ENCODE measurements at regions of chr20 and their contacts with region 1.

Region 1: DNA sequence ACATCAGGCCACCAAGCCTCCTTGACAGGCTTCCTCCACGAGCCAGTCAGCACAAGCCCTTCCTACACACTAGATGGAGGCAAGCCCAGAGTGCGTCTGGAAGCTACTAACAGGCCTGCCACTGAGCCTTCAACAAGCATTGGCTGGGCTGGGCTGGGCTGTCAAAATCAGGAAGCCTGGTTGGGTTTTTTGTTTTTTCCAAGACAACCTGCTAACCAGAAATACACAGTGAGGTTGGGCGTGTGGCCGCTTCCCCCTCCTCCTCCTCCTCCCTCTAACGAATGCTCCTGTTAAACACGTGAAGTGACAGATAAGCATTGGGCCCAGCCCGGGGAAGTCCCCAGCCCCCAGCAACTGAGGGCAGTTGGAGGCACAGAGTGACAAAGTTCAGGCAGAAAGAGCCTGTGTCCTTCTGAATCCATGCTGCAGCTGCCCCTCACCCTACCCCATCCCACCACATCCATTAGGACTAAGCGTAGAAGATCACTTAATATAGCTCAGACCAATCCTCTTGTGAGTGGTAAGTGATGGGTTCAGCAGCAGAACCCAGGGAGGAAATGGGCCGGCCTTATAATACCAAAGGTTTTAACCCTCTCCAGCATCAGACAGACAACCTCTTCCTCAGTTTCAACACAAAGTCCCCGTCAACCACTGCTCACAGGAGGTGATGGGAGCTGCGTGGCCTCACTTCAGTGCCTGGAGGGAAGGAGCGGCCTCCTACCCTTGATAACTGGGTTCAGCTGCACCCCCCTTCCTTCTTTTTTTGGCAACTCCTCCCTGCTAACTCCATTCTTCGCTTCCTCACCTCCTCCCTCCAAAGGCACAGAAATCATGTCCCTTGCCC is 1.1 kb downstream of the NFATC2 start:
- DNase-seq: peak; percentile 46 to 89 (median 81)
- ATAC-seq: peak; percentile 87
- H3K4me3 ChIP-seq: peak overlapping the region; percentile 68
- H3K4me3 Mint-ChIP-seq: peak overlapping the region; percentile 93 to 100 (median 98)
- H3K27ac ChIP-seq: peak overlapping the region; percentile 96
- H3K27ac Mint-ChIP-seq: peak overlapping the region; percentile 88 to 100 (median 97)
- H3K4me1 ChIP-seq: peaks cover 46 to 48% of the 10 kb centered on the region in 2 donors
- H3K4me1 Mint-ChIP-seq: peaks cover 38 to 62% (median 56%) of the 10 kb centered on the region in 7 donors
- H3K27me3 ChIP-seq: no peaks in the 10 kb centered on the region
- H3K27me3 Mint-ChIP-seq: peaks cover 0 to 22% (median 0%) of the 10 kb centered on the region in 5 donors

Region 2: DNA sequence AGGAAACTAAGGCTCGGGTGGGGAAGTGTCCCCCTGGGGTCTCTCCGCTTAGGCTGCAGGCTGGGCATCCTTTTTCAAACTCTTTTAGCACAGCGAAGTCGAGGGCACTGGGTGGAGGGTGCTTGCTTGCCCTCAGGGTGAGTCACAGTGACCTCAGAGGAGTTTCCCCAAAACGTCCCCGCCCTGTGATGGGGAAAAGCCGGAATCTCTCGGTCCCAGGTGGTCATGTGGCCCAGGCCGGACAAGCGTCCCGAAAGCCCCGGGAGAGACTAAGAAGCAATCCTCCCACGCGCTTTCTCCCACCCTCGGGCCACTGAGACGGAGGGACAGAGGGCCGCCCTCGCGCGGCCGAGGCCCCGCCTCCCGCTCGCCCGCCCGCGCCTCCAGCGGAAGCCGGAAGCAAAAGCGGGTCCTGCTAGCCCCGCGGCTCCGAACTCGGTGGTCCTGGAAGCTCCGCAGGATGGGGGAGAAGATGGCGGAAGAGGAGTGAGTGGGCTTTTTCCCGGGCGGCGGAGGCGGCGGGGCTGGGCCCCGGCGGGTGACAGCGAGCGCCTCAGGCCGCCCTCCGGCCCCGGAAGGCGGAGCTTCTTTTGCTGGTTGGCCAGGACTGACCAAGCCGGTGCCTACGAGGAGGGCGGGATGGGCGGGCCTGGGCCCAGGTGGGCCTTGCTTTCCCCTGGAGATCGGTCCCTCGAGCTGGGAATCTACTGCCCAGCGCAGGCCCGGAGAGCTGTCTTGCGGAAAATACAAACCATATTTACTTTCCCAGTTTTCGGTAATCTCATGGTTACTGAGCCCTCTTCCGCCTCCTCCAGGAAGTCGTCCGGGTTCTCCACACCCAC is 1728.7 kb before region 1 on chr20 and contains the start of gene SLC9A8:
- CTCF ChIA-PET with region 1: no interaction called
- POLR2A ChIA-PET with region 1: no interaction called
- intact Hi-C with region 1: loop called in 1 of 2 experiments (anchors 5 kb)
- DNase-seq: peak; percentile 67 to 85 (median 75)
- ATAC-seq: peak; percentile 93
- H3K4me3 ChIP-seq: peak within 1 kb of the TSS; percentile 81
- H3K4me3 Mint-ChIP-seq: peak within 1 kb of the TSS; percentile 90 to 99 (median 94)
- H3K27ac ChIP-seq: peak within 1 kb of the TSS; percentile 95
- H3K27ac Mint-ChIP-seq: peak within 1 kb of the TSS; percentile 94 to 98 (median 96)
- H3K4me1 ChIP-seq: peaks cover 12 to 17% of the 10 kb centered on the region in 2 donors
- H3K4me1 Mint-ChIP-seq: peaks cover 13 to 44% (median 39%) of the 10 kb centered on the region in 7 donors
- H3K27me3 ChIP-seq: no peaks in the 10 kb centered on the region
- H3K27me3 Mint-ChIP-seq: no peaks in the 10 kb centered on the region
- total RNA-seq, gene SLC9A8: 21.7 to 42.5 (median 25.7) TPM

Region 3: GRCh38 chr20:51385646-51386530 is 155.5 kb before region 1 on chr20:
- CTCF ChIA-PET with region 1: interaction called, 6 read pairs
- POLR2A ChIA-PET with region 1: interaction called, 3 read pairs
- intact Hi-C with region 1: loop called (anchors 1 to 5 kb)
- DNase-seq: peak in 4 of 9 donors; percentile 10 to 27 (median 20)
- ATAC-seq: peak; percentile 48
- H3K4me3 ChIP-seq: no peak overlapping the region
- H3K4me3 Mint-ChIP-seq: no peak overlapping the region
- H3K27ac ChIP-seq: no peak overlapping the region
- H3K27ac Mint-ChIP-seq: peak overlapping the region in 8 of 9 donors; percentile 4 to 77 (median 62)
- H3K4me1 ChIP-seq: peaks cover 0 to 67% of the 10 kb centered on the region in 2 donors
- H3K4me1 Mint-ChIP-seq: peaks cover 0 to 61% (median 5%) of the 10 kb centered on the region in 7 donors
- H3K27me3 ChIP-seq: no peaks in the 10 kb centered on the region
- H3K27me3 Mint-ChIP-seq: no peaks in the 10 kb centered on the region

Region 4: DNA sequence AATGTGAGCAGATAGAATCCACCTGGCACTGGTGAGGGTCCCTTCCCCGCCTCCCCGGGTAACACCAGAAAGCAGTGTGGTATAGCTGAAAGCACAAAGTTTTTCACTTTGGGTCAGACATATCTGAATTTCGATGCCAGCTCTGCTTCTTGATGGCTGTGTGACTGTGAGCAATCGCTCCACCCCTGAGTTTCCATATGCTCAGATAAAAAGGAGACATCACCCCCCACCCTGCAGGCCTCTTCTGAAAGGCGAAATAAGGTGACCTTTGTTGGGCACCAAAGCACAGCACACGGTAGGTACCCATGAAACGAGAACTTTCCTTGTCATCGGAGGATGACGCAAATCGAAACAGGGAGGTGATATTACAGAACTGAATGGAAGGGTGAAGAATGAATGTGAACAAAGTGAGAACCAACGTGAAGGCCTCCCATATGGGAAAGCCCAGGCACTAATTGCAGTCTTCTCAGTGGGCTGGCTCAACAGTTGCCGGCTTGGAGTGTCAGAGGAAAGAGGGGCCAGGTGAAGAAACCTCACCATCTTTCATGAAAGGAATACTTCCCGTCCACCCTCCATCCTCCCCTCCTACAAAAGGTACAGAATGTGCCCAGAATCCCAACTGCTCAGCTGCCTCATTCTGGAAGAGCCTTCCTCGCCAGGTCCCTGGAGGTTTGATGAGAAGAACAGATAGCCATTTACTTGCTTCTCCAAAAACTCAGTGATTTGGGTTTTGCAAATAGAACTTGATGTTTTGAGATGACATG is 60.7 kb before region 1 on chr20:
- CTCF ChIA-PET with region 1: no interaction called
- POLR2A ChIA-PET with region 1: interaction called, 3 read pairs
- intact Hi-C with region 1: loop called in 1 of 2 experiments (anchors 1 kb)
- DNase-seq: peak in 2 of 9 donors; percentile 36 to 66
- ATAC-seq: peak; percentile 68
- H3K4me3 ChIP-seq: peak overlapping the region; percentile 8
- H3K4me3 Mint-ChIP-seq: peak overlapping the region; percentile 60 to 86 (median 76)
- H3K27ac ChIP-seq: peak overlapping the region; percentile 63
- H3K27ac Mint-ChIP-seq: peak overlapping the region; percentile 60 to 94 (median 88)
- H3K4me1 ChIP-seq: peaks cover 30 to 33% of the 10 kb centered on the region in 2 donors
- H3K4me1 Mint-ChIP-seq: peaks cover 64 to 90% (median 86%) of the 10 kb centered on the region in 7 donors
- H3K27me3 ChIP-seq: no peaks in the 10 kb centered on the region
- H3K27me3 Mint-ChIP-seq: no peaks in the 10 kb centered on the region

Region 5: GRCh38 chr20:51512645-51513044 is 28.8 kb before region 1 on chr20:
- CTCF ChIA-PET with region 1: interaction called, 3 read pairs
- POLR2A ChIA-PET with region 1: interaction called, 21 read pairs
- intact Hi-C with region 1: loop called in 1 of 2 experiments (anchors 1 kb)
- DNase-seq: peak in 6 of 9 donors; percentile 34 to 61 (median 44)
- ATAC-seq: peak; percentile 80
- H3K4me3 ChIP-seq: peak overlapping the region; percentile 9
- H3K4me3 Mint-ChIP-seq: peak overlapping the region; percentile 47 to 81 (median 62)
- H3K27ac ChIP-seq: peak overlapping the region; percentile 61
- H3K27ac Mint-ChIP-seq: peak overlapping the region; percentile 82 to 94 (median 91)
- H3K4me1 ChIP-seq: peaks cover 60 to 61% of the 10 kb centered on the region in 2 donors
- H3K4me1 Mint-ChIP-seq: peaks cover 57 to 97% (median 89%) of the 10 kb centered on the region in 7 donors
- H3K27me3 ChIP-seq: no peaks in the 10 kb centered on the region
- H3K27me3 Mint-ChIP-seq: no peaks in the 10 kb centered on the region

Region 6: DNA sequence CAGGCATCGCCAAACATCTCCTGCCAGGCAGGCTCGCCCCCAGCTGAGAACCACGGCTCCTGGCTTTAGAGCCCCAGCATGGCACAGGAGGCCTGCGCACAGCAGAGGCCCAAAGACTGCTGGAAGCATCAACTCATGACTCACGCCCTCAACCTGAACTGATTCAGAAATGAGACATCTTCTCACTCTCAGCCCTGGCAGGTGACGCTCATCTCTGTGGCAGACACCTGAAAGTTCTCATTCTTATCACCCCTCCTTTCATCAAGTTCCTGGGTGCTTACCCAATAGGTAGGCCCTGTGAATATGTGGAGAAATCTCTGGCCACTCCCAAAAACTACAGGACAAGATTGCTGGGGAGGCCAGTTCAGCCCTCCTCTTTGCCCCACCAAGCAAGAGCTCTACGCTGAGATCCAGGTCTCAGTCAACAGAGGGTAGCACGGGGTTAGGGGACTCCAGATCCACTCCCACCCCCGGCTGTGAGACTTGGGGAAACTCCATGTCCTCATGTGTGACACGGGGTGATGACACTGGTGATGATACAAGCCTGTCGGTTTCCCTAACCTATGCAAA is 10.2 kb before region 1 on chr20:
- CTCF ChIA-PET with region 1: no interaction called
- POLR2A ChIA-PET with region 1: interaction called, 10 read pairs
- intact Hi-C with region 1: loop called (anchors 1 kb)
- DNase-seq: peak in 2 of 9 donors; percentile 47 to 75
- ATAC-seq: peak; percentile 70
- H3K4me3 ChIP-seq: no peak overlapping the region
- H3K4me3 Mint-ChIP-seq: peak overlapping the region in 9 of 10 donors; percentile 17 to 79 (median 57)
- H3K27ac ChIP-seq: peak overlapping the region; percentile 39
- H3K27ac Mint-ChIP-seq: peak overlapping the region; percentile 65 to 91 (median 84)
- H3K4me1 ChIP-seq: peaks cover 65 to 93% of the 10 kb centered on the region in 2 donors
- H3K4me1 Mint-ChIP-seq: peaks cover 75 to 97% (median 94%) of the 10 kb centered on the region in 7 donors
- H3K27me3 ChIP-seq: no peaks in the 10 kb centered on the region
- H3K27me3 Mint-ChIP-seq: no peaks in the 10 kb centered on the region

Region 7: DNA sequence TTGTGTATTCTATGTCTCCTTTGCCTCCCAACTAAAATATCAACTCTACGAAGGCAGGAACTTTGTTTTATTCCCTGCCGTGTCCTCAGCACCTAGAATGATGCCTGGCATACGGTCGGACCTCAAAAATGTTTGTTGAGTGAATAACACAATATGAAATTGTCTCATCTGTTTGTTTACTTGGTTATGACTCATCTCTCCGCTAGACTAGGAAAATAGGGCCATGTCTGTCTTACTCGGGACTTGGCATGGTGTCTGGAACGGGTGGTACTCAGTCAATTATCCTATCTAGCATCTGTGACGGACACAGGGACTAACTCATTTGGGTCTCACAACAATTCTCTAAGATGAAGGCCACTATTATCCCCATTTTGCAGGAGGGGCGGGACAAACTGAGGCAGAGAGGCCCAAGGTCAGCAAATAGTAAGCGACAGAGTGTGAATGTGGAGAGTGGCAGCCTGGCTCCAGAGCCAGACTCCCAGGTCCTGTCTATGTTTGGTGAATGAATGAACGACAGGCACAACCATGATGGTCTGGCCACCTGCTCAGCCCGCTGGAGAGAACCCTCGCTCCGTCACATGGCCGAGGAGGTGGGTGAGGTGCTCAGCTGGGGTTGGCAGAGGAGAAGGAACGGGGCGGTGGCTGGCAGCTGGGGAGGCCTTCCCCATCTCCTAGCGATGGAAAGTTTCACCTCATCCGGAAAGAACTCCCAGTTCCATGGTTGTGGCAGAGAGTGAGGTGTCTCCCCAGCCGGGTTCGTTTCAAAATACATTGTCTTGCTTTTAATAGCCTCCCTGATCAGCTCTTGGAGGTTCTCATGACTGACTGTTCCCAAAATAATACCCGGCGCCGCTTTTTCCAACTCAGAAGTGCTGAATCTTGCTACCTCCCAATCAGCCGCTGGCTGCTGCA is 28.7 kb after region 1 on chr20:
- CTCF ChIA-PET with region 1: no interaction called
- POLR2A ChIA-PET with region 1: no interaction called
- intact Hi-C with region 1: no loop called
- DNase-seq: no peak
- ATAC-seq: no peak
- H3K4me3 ChIP-seq: no peak overlapping the region
- H3K4me3 Mint-ChIP-seq: no peak overlapping the region
- H3K27ac ChIP-seq: no peak overlapping the region
- H3K27ac Mint-ChIP-seq: no peak overlapping the region
- H3K4me1 ChIP-seq: no peaks in the 10 kb centered on the region
- H3K4me1 Mint-ChIP-seq: no peaks in the 10 kb centered on the region
- H3K27me3 ChIP-seq: no peaks in the 10 kb centered on the region
- H3K27me3 Mint-ChIP-seq: peaks cover 0 to 37% (median 0%) of the 10 kb centered on the region in 5 donors

Region 8: GRCh38 chr20:51595058-51595532 is 53.7 kb after region 1 on chr20:
- CTCF ChIA-PET with region 1: interaction called, 6 read pairs
- POLR2A ChIA-PET with region 1: interaction called, 6 read pairs
- intact Hi-C with region 1: loop called (anchors 1 kb)
- DNase-seq: peak; percentile 45 to 75 (median 68)
- ATAC-seq: peak; percentile 95
- H3K4me3 ChIP-seq: no peak overlapping the region
- H3K4me3 Mint-ChIP-seq: peak overlapping the region; percentile 53 to 76 (median 66)
- H3K27ac ChIP-seq: no peak overlapping the region
- H3K27ac Mint-ChIP-seq: peak overlapping the region; percentile 14 to 93 (median 69)
- H3K4me1 ChIP-seq: no peaks in the 10 kb centered on the region
- H3K4me1 Mint-ChIP-seq: peaks cover 8 to 32% (median 13%) of the 10 kb centered on the region in 7 donors
- H3K27me3 ChIP-seq: no peaks in the 10 kb centered on the region
- H3K27me3 Mint-ChIP-seq: peaks cover 0 to 9% (median 0%) of the 10 kb centered on the region in 5 donors

Measured in naive thymus-derived CD4-positive, alpha-beta T cell (primary cell).